ENCODE measurements at regions of chr9 and their contacts with region 1.

Region 1: DNA sequence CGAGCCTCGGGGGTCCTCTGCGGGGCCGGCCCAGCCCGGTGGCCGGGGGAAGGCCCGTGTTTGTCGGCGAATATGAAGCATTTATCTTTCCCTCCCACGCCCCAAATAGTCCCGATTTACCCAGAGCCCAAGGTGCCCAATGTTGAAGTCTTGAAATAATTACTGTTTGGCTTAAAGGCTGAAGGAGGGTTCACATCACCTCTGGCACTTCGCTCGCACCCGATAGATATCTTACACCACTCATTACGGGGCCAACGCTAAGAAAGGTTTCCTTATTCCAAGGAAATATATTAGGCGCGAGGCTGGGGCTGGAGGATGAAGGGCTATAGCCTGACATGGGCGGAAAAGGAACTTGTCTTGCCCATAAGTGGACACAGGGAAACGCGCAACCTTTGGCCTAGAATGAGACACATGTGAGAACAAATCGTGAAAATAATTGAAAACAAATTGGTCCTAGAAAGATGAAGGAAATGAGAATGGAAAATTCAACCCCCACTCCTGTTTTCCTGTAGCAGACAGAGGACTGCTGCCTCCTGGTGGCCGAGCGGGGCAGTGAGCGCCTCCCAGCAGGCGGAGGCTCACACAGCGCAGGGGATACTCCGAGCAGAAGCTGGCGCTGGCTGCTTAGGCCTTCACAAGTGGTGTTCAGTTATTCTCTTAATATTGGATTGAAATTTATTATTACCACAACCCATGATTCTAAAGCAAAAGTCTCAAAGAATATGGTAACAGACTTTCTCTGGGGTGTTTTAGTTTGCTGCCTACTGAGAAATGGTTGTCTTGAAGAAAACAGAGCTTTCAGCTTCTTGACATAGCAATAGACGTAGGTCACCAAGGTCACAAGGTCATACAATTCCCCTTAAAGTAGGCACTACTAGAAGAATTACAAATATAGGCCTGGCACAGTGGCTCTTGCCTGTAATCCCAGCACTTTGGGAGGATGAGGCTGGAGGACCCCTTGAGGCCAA is 7.9 kb downstream of the CCL21 start:
- DNase-seq: peak; percentile 71 to 74 (median 72)
- H3K4me3 ChIP-seq: peak overlapping the region; percentile 54 to 93
- H3K4me3 Mint-ChIP-seq: peak overlapping the region; percentile 81 to 88 (median 86)
- H3K27ac ChIP-seq: no peak overlapping the region
- H3K27ac Mint-ChIP-seq: peak overlapping the region in 6 of 7 donors; percentile 37 to 70 (median 50)
- H3K4me1 ChIP-seq: peaks cover 7% of the 10 kb centered on the region
- H3K4me1 Mint-ChIP-seq: peaks cover 1 to 9% (median 6%) of the 10 kb centered on the region in 4 donors
- H3K27me3 ChIP-seq: no peaks in the 10 kb centered on the region
- H3K27me3 Mint-ChIP-seq: no peaks in the 10 kb centered on the region

Region 2: GRCh38 chr9:34611829-34612630 is 90.0 kb before region 1 on chr9 and contains the start of gene RPP25L:
- CTCF ChIA-PET with region 1: interaction called, 28 read pairs
- POLR2A ChIA-PET with region 1: interaction called, 3 read pairs
- intact Hi-C with region 1: loop called (anchors 1 kb)
- DNase-seq: peak; percentile 83 to 89 (median 86)
- H3K4me3 ChIP-seq: peak within 1 kb of the TSS; percentile 81 to 88
- H3K4me3 Mint-ChIP-seq: peak within 1 kb of the TSS; percentile 87 to 99 (median 92)
- H3K27ac ChIP-seq: peak within 1 kb of the TSS; percentile 71
- H3K27ac Mint-ChIP-seq: peak within 1 kb of the TSS; percentile 83 to 97 (median 96)
- H3K4me1 ChIP-seq: peaks cover 19% of the 10 kb centered on the region
- H3K4me1 Mint-ChIP-seq: peaks cover 7 to 35% (median 25%) of the 10 kb centered on the region in 4 donors
- H3K27me3 ChIP-seq: no peaks in the 10 kb centered on the region
- H3K27me3 Mint-ChIP-seq: no peaks in the 10 kb centered on the region
- total RNA-seq, gene RPP25L: 28.5 to 28.9 TPM

Region 3: DNA sequence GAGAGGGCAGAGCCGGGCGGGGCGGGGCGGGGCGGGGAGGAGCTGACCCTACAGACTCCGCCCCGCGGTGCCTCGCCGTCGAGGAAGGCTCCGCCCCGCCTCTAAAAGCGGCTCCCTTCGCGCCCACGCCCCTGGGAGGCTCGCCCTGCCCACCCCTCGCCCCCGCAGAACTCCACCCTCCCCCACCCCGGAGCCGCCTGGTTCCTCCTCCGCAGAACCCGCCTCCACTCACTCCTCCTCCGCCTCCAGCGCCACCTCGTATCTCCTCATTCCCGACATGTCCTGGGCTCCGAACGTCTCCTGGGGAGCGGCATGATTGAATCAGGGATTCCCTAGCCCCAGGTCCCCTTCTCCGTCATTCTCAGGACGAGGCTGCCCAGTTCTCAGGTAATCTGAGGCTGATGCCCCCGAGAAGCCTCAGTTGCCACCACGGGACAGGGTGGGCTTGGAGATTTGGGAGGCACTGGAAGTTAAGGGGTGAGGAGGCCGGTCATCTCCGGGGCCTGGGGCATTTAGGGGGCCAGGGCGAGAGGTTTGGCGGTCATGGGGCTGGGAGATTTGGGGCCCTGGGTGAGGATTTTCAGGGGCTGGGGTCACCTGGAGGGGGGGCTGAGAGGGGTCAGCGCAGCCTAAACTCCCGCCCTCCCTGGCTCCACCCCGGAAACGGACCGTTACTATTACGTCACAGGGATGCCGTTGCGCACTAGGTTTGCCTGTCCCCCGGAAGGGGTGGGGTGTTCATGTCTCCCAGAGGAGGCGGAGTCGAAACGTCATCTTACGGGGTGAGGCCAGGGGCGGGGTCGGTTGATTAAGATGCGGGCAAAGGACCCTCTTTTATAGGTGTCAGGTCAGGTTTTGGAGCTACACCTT is 36.4 kb before region 1 on chr9:
- CTCF ChIA-PET with region 1: interaction called, 90 read pairs
- POLR2A ChIA-PET with region 1: interaction called, 4 read pairs
- intact Hi-C with region 1: loop called (anchors 1 kb)
- DNase-seq: peak; percentile 87 to 94 (median 89)
- H3K4me3 ChIP-seq: peak overlapping the region; percentile 75 to 95
- H3K4me3 Mint-ChIP-seq: peak overlapping the region; percentile 85 to 97 (median 93)
- H3K27ac ChIP-seq: peak overlapping the region; percentile 98
- H3K27ac Mint-ChIP-seq: peak overlapping the region; percentile 95 to 99 (median 99)
- H3K4me1 ChIP-seq: peaks cover 59% of the 10 kb centered on the region
- H3K4me1 Mint-ChIP-seq: peaks cover 41 to 65% (median 53%) of the 10 kb centered on the region in 4 donors
- H3K27me3 ChIP-seq: no peaks in the 10 kb centered on the region
- H3K27me3 Mint-ChIP-seq: no peaks in the 10 kb centered on the region

Region 4: GRCh38 chr9:34686231-34686630 is 15.8 kb before region 1 on chr9:
- CTCF ChIA-PET with region 1: interaction called, 16 read pairs
- POLR2A ChIA-PET with region 1: no interaction called
- intact Hi-C with region 1: no loop called
- DNase-seq: no peak
- H3K4me3 ChIP-seq: no peak overlapping the region
- H3K4me3 Mint-ChIP-seq: no peak overlapping the region
- H3K27ac ChIP-seq: no peak overlapping the region
- H3K27ac Mint-ChIP-seq: no peak overlapping the region
- H3K4me1 ChIP-seq: no peaks in the 10 kb centered on the region
- H3K4me1 Mint-ChIP-seq: no peaks in the 10 kb centered on the region
- H3K27me3 ChIP-seq: no peaks in the 10 kb centered on the region
- H3K27me3 Mint-ChIP-seq: no peaks in the 10 kb centered on the region

Region 5: GRCh38 chr9:34715639-34716215 is 13.7 kb after region 1 on chr9:
- CTCF ChIA-PET with region 1: interaction called, 13 read pairs
- POLR2A ChIA-PET with region 1: no interaction called
- intact Hi-C with region 1: no loop called
- DNase-seq: no peak
- H3K4me3 ChIP-seq: no peak overlapping the region
- H3K4me3 Mint-ChIP-seq: no peak overlapping the region
- H3K27ac ChIP-seq: no peak overlapping the region
- H3K27ac Mint-ChIP-seq: no peak overlapping the region
- H3K4me1 ChIP-seq: no peaks in the 10 kb centered on the region
- H3K4me1 Mint-ChIP-seq: peaks cover 0 to under 1% (median 0%) of the 10 kb centered on the region in 4 donors
- H3K27me3 ChIP-seq: no peaks in the 10 kb centered on the region
- H3K27me3 Mint-ChIP-seq: peaks cover 10 to 17% of the 10 kb centered on the region in 2 donors

Region 6: DNA sequence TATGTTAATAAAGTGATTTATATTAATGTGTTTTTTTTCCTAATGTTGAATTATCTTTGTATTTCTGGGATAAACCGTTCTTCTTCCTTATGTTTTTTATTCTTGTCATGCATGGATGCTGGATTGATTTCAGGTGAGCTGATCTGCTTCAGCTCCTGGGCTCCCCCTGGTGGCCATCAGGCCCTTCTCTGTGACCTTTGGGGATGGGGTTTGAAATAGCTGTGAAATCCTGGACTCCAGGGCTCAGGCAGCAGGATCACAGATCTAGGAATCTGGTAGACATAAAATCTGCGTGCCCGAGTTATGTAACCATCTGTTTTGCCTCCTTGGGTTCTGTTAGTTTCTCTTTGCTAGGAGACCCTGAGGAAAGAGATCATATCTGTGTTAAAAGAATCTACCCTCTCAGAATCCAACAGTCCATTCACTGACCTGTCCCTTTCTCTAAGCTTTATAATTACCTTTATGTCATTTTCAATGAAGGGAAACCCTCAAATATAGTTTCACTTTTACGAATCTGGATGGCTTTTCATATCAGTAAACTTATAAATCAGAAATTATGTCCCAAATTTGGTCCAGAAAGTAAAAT is 1180.3 kb after region 1 on chr9:
- CTCF ChIA-PET with region 1: no interaction called
- POLR2A ChIA-PET with region 1: no interaction called
- intact Hi-C with region 1: no loop called
- DNase-seq: peak; percentile 70 to 75 (median 71)
- H3K4me3 ChIP-seq: no peak overlapping the region
- H3K4me3 Mint-ChIP-seq: no peak overlapping the region
- H3K27ac ChIP-seq: no peak overlapping the region
- H3K27ac Mint-ChIP-seq: no peak overlapping the region
- H3K4me1 ChIP-seq: no peaks in the 10 kb centered on the region
- H3K4me1 Mint-ChIP-seq: no peaks in the 10 kb centered on the region
- H3K27me3 ChIP-seq: no peaks in the 10 kb centered on the region
- H3K27me3 Mint-ChIP-seq: peaks cover 2 to 8% of the 10 kb centered on the region in 2 donors